ENCODE measurements at regions of chr6 and their contacts with region 1.

Region 1: DNA sequence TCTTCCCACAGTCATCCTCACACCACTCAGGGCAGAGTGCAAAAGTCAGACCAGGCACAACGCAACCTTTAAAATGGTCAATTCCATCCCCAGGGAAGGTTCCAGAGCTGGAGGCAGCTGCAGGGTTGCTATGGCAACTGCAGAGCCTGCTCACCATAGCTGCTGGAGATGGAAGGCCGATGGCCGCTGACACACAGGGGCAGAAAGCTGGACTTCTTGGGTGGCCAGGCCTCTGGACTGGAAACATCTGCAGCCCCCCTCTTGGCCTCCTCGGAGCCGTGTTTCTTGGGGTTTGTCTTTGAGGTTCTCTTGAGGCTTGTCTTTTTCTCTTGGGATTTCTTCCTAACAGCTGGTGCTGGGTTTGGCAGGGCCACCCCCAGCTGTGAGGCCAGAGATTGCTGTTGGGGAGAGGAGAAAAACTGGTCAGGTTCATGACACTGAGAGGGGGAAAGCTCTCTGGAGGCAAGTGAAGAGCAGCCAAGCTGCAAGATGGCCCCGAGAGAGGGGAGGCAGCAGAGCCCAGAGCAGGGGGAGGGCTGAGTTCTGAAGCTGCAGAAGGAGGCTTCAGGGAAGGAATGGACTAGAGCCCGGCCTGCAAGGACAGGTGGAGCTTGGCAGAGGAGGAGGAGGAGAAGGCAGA is 10.2 kb downstream of the BNIP5 start:
- DNase-seq: peak in 1 of 2 donors; percentile 64
- ATAC-seq: peak in 1 of 4 donors; percentile 53
- H3K4me3 ChIP-seq: no peak overlapping the region
- H3K27ac ChIP-seq: no peak overlapping the region
- H3K4me1 ChIP-seq: no peaks in the 10 kb centered on the region
- H3K27me3 ChIP-seq: peaks cover 0 to 4% (median 0%) of the 10 kb centered on the region in 3 donors
- CTCF ChIP-seq: no peak

Region 2: GRCh38 chr6:36139429-36139828 is 187.0 kb before region 1 on chr6:
- intact Hi-C with region 1: no loop called
- DNase-seq: peak in 1 of 2 donors; percentile 39
- ATAC-seq: peak in 2 of 4 donors; percentile 43 to 46
- H3K4me3 ChIP-seq: no peak overlapping the region
- H3K27ac ChIP-seq: peak overlapping the region; percentile 79
- H3K4me1 ChIP-seq: peaks cover 14% of the 10 kb centered on the region
- H3K27me3 ChIP-seq: no peaks in the 10 kb centered on the region
- CTCF ChIP-seq: no peak

Region 3: DNA sequence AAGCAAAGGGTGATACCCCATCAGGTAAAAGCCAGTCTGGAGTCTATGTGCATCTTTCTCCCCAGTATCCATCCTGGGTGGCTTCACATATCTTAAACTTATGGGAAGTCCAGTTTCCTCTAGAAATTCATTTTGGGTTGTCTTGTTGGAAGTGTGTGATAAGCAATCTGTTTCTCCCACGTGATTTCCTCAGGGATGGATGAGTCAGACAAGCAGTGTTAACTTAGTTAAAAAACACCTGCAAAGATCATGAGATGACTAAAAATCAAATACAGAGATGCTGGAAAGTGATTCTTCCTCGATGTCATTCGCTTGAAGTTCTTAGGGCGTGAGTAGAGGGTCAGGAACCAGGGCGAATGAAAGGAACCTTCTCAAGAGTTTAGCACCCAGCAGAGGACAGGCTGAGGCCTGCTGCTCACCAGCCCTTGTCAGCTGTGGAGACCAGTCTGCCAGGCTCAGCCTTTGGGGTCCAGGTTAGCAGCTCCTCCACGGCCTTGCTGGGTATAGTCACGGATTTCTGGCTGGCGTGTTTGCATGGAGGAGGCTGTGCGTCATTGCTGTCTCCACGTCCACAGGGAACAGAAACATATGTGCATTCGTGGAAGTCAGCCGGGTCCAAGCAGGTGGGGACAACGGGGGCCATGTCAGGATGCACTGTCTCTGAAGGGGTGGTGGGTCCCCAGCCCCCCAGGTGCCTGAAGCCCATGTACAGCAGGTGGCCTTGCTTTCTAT is 59.4 kb before region 1 on chr6:
- intact Hi-C with region 1: loop called in 1 of 2 experiments (anchors 2 kb)
- DNase-seq: no peak
- ATAC-seq: no peak
- H3K4me3 ChIP-seq: no peak overlapping the region
- H3K27ac ChIP-seq: no peak overlapping the region
- H3K4me1 ChIP-seq: no peaks in the 10 kb centered on the region
- H3K27me3 ChIP-seq: peaks cover 0 to 43% (median 5%) of the 10 kb centered on the region in 3 donors
- CTCF ChIP-seq: no peak

Measured in psoas muscle (tissue), 8 donors.